Tibial artery (tissue), 4 donors: ENCODE measurements at regions of chr2 and their contacts with region 1.

Region 1: GRCh38 chr2:191382801-191383200 is 137.6 kb downstream of the MYO1B start:
- DNase-seq: no peak
- H3K4me3 ChIP-seq: no peak overlapping the region
- H3K27ac ChIP-seq: peak overlapping the region in 1 of 2 donors; percentile 46
- H3K4me1 ChIP-seq: peaks cover 0 to 73% (median 25%) of the 10 kb centered on the region in 4 donors
- H3K27me3 ChIP-seq: no peaks in the 10 kb centered on the region
- CTCF ChIP-seq: no peak

Region 2: DNA sequence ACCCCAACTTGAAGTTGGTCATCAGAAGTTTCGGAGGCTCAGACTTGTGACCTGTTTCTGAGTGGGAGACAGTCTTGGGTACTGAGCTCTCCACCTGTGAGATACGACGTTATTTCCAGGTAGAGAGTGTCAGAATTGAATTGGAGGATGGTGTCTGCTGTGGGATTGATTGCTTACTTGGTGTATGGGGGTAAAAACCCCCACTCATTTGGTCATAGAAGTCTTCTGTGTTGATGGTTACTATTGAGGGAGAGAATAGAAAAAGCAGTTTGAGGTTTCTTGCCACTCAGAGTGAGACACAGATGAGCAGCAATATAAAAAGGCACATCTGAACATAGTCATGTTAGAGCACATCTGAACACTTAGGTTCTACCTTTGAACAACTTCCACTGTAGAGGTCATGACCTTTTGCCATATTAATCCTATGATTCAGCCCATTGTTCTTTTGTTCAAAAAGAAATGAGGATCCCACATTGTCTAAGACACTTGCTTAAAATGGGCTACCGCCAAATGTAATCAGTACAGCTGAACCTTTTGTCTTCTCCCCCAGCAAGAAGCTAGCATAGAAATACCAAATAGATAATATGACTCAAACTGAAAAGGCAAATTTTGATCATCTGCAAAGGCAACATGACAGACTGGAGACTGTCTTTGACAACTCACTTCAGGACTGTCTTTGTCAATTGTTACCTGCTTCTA is 660.6 kb before region 1 on chr2:
- intact Hi-C with region 1: no loop called
- DNase-seq: no peak
- H3K4me3 ChIP-seq: no peak overlapping the region
- H3K27ac ChIP-seq: no peak overlapping the region
- H3K4me1 ChIP-seq: no peaks in the 10 kb centered on the region
- H3K27me3 ChIP-seq: no peaks in the 10 kb centered on the region
- CTCF ChIP-seq: no peak

Region 3: GRCh38 chr2:190880378-190881073 is 502.3 kb before region 1 on chr2 and contains the start of gene GLS:
- intact Hi-C with region 1: loop called (anchors 10 kb)
- DNase-seq: peak; percentile 96 to 99
- H3K4me3 ChIP-seq: peak within 1 kb of the TSS; percentile 83 to 91
- H3K27ac ChIP-seq: peak within 1 kb of the TSS; percentile 95 to 97
- H3K4me1 ChIP-seq: peaks cover 0 to 50% (median 3%) of the 10 kb centered on the region in 4 donors
- H3K27me3 ChIP-seq: no peaks in the 10 kb centered on the region
- CTCF ChIP-seq: no peak